ENCODE measurements at regions of chr1 and their contacts with region 1.

Region 1: GRCh38 chr1:225441314-225442122 is 13.7 kb upstream of the LBR start:
- DNase-seq: peak; percentile 37
- H3K4me3 Mint-ChIP-seq: peak overlapping the region; percentile 53
- H3K27ac Mint-ChIP-seq: peak overlapping the region; percentile 81
- H3K4me1 Mint-ChIP-seq: peaks cover 63% of the 10 kb centered on the region
- H3K27me3 Mint-ChIP-seq: no peaks in the 10 kb centered on the region

Region 2: GRCh38 chr1:225191199-225191753 is 250.2 kb before region 1 on chr1:
- CTCF ChIA-PET with region 1: no interaction called
- POLR2A ChIA-PET with region 1: no interaction called
- DNase-seq: no peak
- H3K4me3 Mint-ChIP-seq: no peak overlapping the region
- H3K27ac Mint-ChIP-seq: no peak overlapping the region
- H3K4me1 Mint-ChIP-seq: no peaks in the 10 kb centered on the region
- H3K27me3 Mint-ChIP-seq: peaks cover 5% of the 10 kb centered on the region

Region 3: DNA sequence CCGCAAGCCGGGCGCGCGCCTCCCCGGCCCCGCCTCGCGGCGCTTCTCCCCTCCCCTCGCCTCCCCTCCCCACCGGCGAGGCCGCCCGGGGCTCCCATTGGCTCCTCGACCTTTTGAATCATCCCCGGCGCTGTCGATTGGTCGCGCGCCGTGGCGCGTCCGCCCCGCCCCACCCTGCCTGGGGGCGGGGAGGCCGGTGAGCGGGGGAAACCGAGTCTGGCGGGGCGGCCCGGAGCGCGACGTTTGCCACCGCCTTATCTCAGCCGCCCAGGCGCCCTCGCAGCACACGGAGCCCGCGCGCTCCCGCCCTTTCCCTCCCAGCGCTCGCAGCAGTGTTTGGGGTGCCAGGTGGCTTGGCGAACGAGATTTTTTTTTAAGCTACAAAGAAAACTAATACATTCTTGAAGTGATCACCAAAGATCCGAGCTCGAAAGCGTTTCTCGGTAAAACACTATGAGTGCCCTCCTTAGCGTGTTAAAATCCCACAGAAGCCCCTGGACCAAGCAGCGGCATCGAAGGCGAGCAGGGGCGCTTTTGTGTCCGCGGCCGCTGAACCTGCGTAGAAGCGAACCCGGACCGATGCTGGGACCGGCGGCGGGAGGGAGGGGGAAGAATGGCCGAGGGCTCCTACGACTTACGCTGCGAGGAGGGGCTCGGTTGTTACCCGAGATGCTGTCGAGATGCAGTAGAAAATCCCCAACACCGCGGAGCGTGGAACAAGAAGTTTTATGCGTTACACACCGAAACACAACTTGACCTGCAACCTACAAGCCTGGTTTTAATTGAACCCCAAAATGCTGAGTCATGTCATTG is 13.2 kb before region 1 on chr1:
- CTCF ChIA-PET with region 1: interaction called, 5 read pairs
- POLR2A ChIA-PET with region 1: interaction called, 11 read pairs
- DNase-seq: peak; percentile 93
- H3K4me3 Mint-ChIP-seq: peak overlapping the region; percentile 90
- H3K27ac Mint-ChIP-seq: peak overlapping the region; percentile 96
- H3K4me1 Mint-ChIP-seq: peaks cover 50% of the 10 kb centered on the region
- H3K27me3 Mint-ChIP-seq: no peaks in the 10 kb centered on the region

Region 4: DNA sequence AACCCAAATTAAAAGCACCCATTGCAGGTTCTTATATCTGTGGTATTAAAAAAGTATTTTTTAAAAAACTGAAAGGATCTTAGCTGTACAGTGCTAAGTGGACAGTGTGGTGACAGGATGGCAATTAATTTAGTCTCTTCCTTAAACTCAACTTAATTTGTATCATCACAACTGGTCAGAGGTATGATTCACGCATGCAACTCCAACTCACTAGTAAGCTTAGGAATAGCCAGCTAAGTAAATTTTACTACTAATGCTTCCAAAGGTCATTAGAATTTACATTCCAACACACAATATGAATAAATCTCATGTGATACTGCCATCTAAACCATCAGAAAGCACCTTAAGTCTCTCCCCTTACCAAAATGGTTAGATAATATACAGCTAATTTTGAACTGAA is 176.0 kb after region 1 on chr1:
- CTCF ChIA-PET with region 1: no interaction called
- POLR2A ChIA-PET with region 1: no interaction called
- DNase-seq: no peak
- H3K4me3 Mint-ChIP-seq: no peak overlapping the region
- H3K27ac Mint-ChIP-seq: no peak overlapping the region
- H3K4me1 Mint-ChIP-seq: no peaks in the 10 kb centered on the region
- H3K27me3 Mint-ChIP-seq: no peaks in the 10 kb centered on the region

Region 5: DNA sequence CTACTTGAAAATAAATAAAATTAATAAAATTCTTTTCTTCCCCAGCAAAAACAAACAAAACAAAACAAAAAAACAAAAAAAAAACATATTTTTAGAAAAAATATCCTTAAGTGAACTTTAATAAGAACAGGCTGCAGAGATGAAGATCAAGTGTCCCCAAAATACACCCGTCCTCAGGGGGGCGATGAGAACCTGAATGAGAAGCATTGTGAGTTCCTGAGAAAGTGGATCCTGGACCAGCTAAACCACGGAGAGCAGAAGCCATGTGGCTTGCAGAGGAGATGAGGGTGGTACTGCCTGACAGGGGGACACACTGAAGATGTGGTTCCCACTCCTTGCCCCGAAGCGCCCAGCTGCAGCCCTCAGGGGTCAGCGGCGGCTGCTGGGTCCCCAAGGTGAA is 1208.3 kb after region 1 on chr1:
- CTCF ChIA-PET with region 1: no interaction called
- POLR2A ChIA-PET with region 1: interaction called, 11 read pairs
- DNase-seq: peak; percentile 51
- H3K4me3 Mint-ChIP-seq: no peak overlapping the region
- H3K27ac Mint-ChIP-seq: peak overlapping the region; percentile 43
- H3K4me1 Mint-ChIP-seq: peaks cover 47% of the 10 kb centered on the region
- H3K27me3 Mint-ChIP-seq: no peaks in the 10 kb centered on the region

Measured in activated CD4-positive, alpha-beta T cell treated with anti-CD3 and anti-CD28 coated beads, Interleukin-2, amount 10 ng/mL, durations not matched to agents 7 days and 5 days (primary cell).